ENCODE measurements at regions of chrX and their contacts with region 1.

Region 1: DNA sequence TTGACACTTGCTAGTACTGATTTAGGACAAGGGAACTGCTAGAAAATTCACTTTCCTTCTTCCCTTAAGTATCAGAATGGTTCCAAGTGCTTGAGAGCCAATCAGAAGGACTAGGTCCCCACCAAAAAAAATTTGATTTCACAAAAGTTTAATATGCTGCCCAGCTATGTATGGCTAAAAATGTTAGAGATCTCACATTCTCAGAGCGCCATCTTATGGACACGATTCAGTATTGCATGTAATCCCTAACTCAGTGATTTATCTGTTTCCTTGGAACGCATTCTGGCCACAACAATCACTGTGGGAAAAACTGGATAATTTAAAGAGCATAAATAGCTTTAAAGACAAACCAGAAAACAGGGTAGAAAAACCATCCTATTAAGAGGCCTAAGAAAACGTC is 255.1 kb upstream of the GPC4 start:
- DNase-seq: peak; percentile 12
- ATAC-seq: peak; percentile 54; the same call in 1 of the 2 replicates
- H3K4me3 ChIP-seq: no peak overlapping the region
- H3K27ac ChIP-seq: no peak overlapping the region
- H3K4me1 ChIP-seq: no peaks in the 10 kb centered on the region
- H3K27me3 ChIP-seq: no peaks in the 10 kb centered on the region
- CTCF ChIP-seq: peak; percentile 37 to 62 (median 59)
- POLR2A ChIP-seq: no peak
- RAD21 ChIP-seq: peak; percentile 82

Region 2: DNA sequence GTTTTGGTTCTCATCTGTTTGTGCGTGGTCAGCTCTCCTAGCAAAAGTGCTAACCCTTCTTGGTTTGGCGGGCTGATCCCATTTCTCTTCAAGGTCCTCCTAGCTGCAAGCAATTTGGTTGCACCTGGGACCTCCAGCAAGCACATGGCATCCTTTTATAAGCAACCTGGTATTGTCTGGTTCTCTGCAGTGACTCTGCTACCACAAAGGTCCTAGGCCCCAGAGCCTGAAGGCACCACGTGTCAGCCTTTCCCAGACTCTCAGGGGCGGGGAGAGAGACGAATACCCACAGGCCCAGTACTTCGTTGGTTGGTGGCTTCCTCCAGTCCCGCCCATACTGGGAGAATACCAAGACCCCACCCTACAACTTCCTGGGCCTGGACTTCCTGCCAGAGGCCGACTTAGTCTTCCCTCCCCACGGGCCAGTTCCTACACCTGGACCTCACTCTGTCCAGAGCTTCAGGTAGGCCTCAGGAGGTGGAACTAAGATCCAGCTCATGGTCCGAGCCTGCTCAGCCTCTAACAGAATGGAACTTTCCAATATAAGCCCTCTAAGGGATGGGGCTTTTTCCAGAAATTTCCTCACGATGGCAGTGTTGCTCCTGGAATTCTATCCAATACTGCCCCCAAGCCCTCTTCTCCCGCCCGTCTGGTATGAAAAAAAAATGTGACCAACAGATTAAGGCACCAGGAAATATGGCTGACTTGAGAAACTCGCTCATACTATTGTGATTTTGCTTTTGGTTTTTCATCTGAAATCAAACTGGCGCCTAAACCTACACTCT is 1839.8 kb before region 1 on chrX:
- CTCF ChIA-PET with region 1: no interaction called
- POLR2A ChIA-PET with region 1: no interaction called
- RAD21 ChIA-PET with region 1: no interaction called
- intact Hi-C with region 1: loop called (anchors 5 kb)
- DNase-seq: peak; percentile 85
- ATAC-seq: peak; percentile 94
- H3K4me3 ChIP-seq: peak overlapping the region; percentile 55 to 65
- H3K27ac ChIP-seq: peak overlapping the region; percentile 66
- H3K4me1 ChIP-seq: peaks cover 0 to 24% of the 10 kb centered on the region in 2 experiments; a peak in 3 of 4 replicates
- H3K27me3 ChIP-seq: no peaks in the 10 kb centered on the region
- CTCF ChIP-seq: peak; percentile 41 to 66 (median 44); a peak in 4 of 6 replicates
- POLR2A ChIP-seq: no peak
- RAD21 ChIP-seq: peak; percentile 79

Region 3: GRCh38 chrX:133335027-133335426 is 335.4 kb before region 1 on chrX:
- CTCF ChIA-PET with region 1: interaction called, 29 read pairs
- POLR2A ChIA-PET with region 1: no interaction called
- RAD21 ChIA-PET with region 1: interaction called in 1 of 2 experiments, 3 read pairs
- intact Hi-C with region 1: loop called (anchors 1 kb)
- DNase-seq: no peak
- ATAC-seq: peak; percentile 62; the same call in 1 of the 2 replicates
- H3K4me3 ChIP-seq: no peak overlapping the region
- H3K27ac ChIP-seq: no peak overlapping the region
- H3K4me1 ChIP-seq: no peaks in the 10 kb centered on the region
- H3K27me3 ChIP-seq: no peaks in the 10 kb centered on the region
- CTCF ChIP-seq: peak; percentile 19 to 55 (median 49); a peak in 4 of 6 replicates
- POLR2A ChIP-seq: no peak
- RAD21 ChIP-seq: peak; percentile 50; the same call in 1 of the 2 replicates

Measured in HCT116 (cell line).